A549 (cell line): ENCODE measurements at regions of chr16 and their contacts with region 1.

Region 1: GRCh38 chr16:85564277-85565051 is 48.7 kb upstream of the GSE1 start:
- DNase-seq: peak in 1 of 2 experiments; percentile 38
- ATAC-seq: peak; percentile 41 to 55; a peak in 5 of 6 replicates
- H3K4me3 ChIP-seq: no peak overlapping the region
- H3K27ac ChIP-seq: peak overlapping the region in 1 of 2 experiments; percentile 25; a peak in 1 of 6 replicates
- H3K4me1 ChIP-seq: peaks cover 17% of the 10 kb centered on the region
- CTCF ChIP-seq: peak; percentile 58
- EP300 ChIP-seq: no peak
- POLR2A ChIP-seq: no peak
- RAD21 ChIP-seq: 0 out of 5 replicates have a peak, but pooled peaks of 1 of the 2 experiments have one; percentile 22

Region 2: GRCh38 chr16:85473909-85474620 is 90.4 kb before region 1 on chr16:
- CTCF ChIA-PET with region 1: interaction called, 46 read pairs
- POLR2A ChIA-PET with region 1: no interaction called
- DNase-seq: no peak
- ATAC-seq: peak; percentile 57 to 75
- H3K4me3 ChIP-seq: no peak overlapping the region
- H3K27ac ChIP-seq: no peak overlapping the region
- H3K4me1 ChIP-seq: no peaks in the 10 kb centered on the region
- CTCF ChIP-seq: no peak
- EP300 ChIP-seq: no peak
- POLR2A ChIP-seq: no peak
- RAD21 ChIP-seq: no peak

Region 3: GRCh38 chr16:85485379-85485778 is 79.1 kb before region 1 on chr16:
- CTCF ChIA-PET with region 1: interaction called, 55 read pairs
- POLR2A ChIA-PET with region 1: no interaction called
- DNase-seq: no peak
- ATAC-seq: no peak
- H3K4me3 ChIP-seq: no peak overlapping the region
- H3K27ac ChIP-seq: no peak overlapping the region
- H3K4me1 ChIP-seq: 0 out of 3 replicates have a peak, but pooled peaks cover 2% of the 10 kb centered on the region
- CTCF ChIP-seq: no peak
- EP300 ChIP-seq: no peak
- POLR2A ChIP-seq: no peak
- RAD21 ChIP-seq: no peak

Region 4: GRCh38 chr16:85514595-85515318 is 49.7 kb before region 1 on chr16:
- CTCF ChIA-PET with region 1: interaction called, 11 read pairs
- POLR2A ChIA-PET with region 1: interaction called, 3 read pairs
- DNase-seq: peak; percentile 92 to 95
- ATAC-seq: peak; percentile 85 to 89
- H3K4me3 ChIP-seq: peak overlapping the region; percentile 24; the same call in 2 of the 3 replicates
- H3K27ac ChIP-seq: peak overlapping the region; percentile 95 to 97
- H3K4me1 ChIP-seq: peaks cover 36% of the 10 kb centered on the region
- CTCF ChIP-seq: no peak
- EP300 ChIP-seq: peak; percentile 28 to 78; a peak in 2 of 5 replicates
- POLR2A ChIP-seq: 0 out of 2 replicates have a peak, but pooled peaks have one; percentile 14
- RAD21 ChIP-seq: peak in 1 of 2 experiments; percentile 45; a peak in 2 of 5 replicates

Region 5: GRCh38 chr16:85554112-85554813 is 10.2 kb before region 1 on chr16:
- CTCF ChIA-PET with region 1: interaction called, 27 read pairs
- POLR2A ChIA-PET with region 1: interaction called, 6 read pairs
- DNase-seq: peak; percentile 81 to 88
- ATAC-seq: peak; percentile 54 to 72
- H3K4me3 ChIP-seq: peak overlapping the region; percentile 71
- H3K27ac ChIP-seq: peak overlapping the region; percentile 91 to 99
- H3K4me1 ChIP-seq: peaks cover 23% of the 10 kb centered on the region
- CTCF ChIP-seq: no peak
- EP300 ChIP-seq: no peak
- POLR2A ChIP-seq: 0 out of 2 replicates have a peak, but pooled peaks have one; percentile 29
- RAD21 ChIP-seq: no peak